ENCODE measurements at regions of chr17 and their contacts with region 1.

Region 1: GRCh38 chr17:41665566-41666236 is 23.0 kb upstream of the EIF1 start:
- DNase-seq: peak; percentile 98
- ATAC-seq: peak; percentile 75
- H3K4me3 Mint-ChIP-seq: peak overlapping the region; percentile 92
- H3K27ac Mint-ChIP-seq: peak overlapping the region; percentile 99
- H3K4me1 Mint-ChIP-seq: peaks cover 40% of the 10 kb centered on the region
- H3K27me3 Mint-ChIP-seq: no peaks in the 10 kb centered on the region
- CTCF ChIP-seq: peak; percentile 24

Region 2: DNA sequence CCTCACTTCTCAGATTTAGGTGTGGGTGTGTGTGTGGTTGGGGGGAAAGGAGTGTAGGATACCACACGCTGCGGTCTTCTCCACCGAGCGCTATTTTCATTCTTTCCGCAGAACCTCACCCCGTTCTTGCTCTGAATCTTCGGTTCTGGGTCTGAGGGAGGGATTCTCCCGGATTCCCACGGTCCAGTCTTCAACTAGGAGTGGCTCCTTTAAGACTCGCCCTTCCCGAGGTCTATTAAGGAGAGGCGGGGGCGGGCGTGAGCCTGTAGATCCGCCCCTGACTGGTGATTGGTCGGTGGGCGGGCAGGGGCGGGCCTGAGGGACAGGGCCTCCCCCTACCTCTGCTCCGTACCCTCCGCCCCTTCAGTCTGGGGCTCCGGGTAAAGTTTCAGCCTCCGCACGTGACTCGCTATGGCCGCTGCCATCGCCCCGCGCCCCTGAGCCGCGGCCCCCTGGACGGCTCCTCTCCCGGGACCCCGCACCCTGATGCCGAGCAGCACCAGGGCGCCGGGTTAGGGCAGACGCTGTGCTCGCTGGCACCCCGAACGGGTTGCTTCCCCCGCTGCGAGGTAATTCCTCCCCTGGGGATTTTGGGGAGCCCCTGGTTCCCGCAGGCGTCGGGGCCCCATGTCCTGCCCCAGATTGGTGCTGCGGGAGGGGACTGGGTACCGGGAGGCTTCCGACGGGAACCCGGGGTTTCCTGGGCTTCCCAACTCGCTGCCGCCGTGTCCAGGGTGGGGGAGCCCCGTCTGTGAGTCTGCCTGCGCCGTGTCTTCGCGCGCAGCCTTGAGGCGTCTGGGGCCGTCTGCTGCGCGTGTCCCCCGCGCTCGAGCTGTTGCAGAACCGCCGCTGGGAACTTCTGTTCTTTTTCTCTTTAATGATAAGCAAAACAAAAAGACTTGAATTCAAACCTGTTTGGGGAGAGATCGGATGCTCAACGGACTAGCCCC is 1347.5 kb before region 1 on chr17:
- CTCF ChIA-PET with region 1: no interaction called
- POLR2A ChIA-PET with region 1: no interaction called
- intact Hi-C with region 1: loop called (anchors 2 kb)
- DNase-seq: peak; percentile 88
- ATAC-seq: peak; percentile 65
- H3K4me3 Mint-ChIP-seq: peak overlapping the region; percentile 93
- H3K27ac Mint-ChIP-seq: peak overlapping the region; percentile 98
- H3K4me1 Mint-ChIP-seq: peaks cover 85% of the 10 kb centered on the region
- H3K27me3 Mint-ChIP-seq: no peaks in the 10 kb centered on the region
- CTCF ChIP-seq: no peak

Region 3: GRCh38 chr17:40559954-40560591 is 1105.6 kb before region 1 on chr17:
- CTCF ChIA-PET with region 1: interaction called, 4 read pairs
- POLR2A ChIA-PET with region 1: interaction called, 6 read pairs
- intact Hi-C with region 1: loop called (anchors 2 kb)
- DNase-seq: peak; percentile 71
- ATAC-seq: peak; percentile 25
- H3K4me3 Mint-ChIP-seq: peak overlapping the region; percentile 89
- H3K27ac Mint-ChIP-seq: peak overlapping the region; percentile 99
- H3K4me1 Mint-ChIP-seq: peaks cover 81% of the 10 kb centered on the region
- H3K27me3 Mint-ChIP-seq: no peaks in the 10 kb centered on the region
- CTCF ChIP-seq: peak; percentile 74

Region 4: DNA sequence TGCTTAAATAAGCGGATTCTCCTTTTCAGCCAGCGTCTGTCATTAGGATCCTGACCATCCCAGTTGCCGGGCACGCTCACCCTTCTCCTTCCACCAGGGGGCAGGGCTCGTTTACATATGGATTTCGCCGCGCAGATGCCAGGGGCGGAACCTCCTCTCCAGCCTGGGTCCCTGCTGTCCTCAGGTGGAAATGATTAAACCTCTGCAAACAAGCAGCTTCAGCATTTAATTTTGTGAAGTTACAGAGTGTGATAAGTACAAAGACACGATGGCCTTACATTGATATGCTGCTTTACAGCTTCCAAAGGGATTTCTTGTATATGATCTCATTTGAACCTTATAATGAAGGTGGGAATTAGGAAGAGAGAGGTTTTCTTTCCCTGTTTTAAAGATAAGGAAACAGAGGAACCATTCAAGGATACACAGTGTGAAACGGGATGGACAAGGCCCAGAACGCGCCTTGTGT is 862.1 kb before region 1 on chr17:
- CTCF ChIA-PET with region 1: interaction called, 10 read pairs
- POLR2A ChIA-PET with region 1: interaction called, 3 read pairs
- intact Hi-C with region 1: loop called (anchors 1 kb)
- DNase-seq: peak; percentile 54
- ATAC-seq: peak; percentile 94
- H3K4me3 Mint-ChIP-seq: no peak overlapping the region
- H3K27ac Mint-ChIP-seq: no peak overlapping the region
- H3K4me1 Mint-ChIP-seq: peaks cover 3% of the 10 kb centered on the region
- H3K27me3 Mint-ChIP-seq: peaks cover 51% of the 10 kb centered on the region
- CTCF ChIP-seq: peak; percentile 44

Region 5: DNA sequence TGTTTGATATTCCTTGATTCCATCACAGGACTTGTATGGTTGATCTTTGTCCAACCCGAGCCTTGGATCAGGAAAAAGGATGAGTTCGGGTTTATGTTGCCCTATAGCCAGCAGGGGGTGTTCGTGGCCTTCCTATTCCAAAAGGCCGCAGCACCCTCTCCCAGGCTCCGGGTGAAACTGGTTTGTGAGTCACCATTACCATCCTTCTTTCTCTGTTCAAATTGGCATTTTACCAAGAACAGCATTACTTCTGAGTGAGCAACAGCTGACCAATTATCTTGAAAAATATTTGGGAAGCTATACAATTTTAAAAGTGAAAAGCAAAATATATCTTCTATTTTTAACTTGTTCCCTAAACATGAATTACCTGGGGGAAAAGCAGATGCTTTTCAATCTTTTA is 756.4 kb before region 1 on chr17:
- CTCF ChIA-PET with region 1: interaction called, 16 read pairs
- POLR2A ChIA-PET with region 1: no interaction called
- intact Hi-C with region 1: loop called (anchors 1 kb)
- DNase-seq: no peak
- ATAC-seq: peak; percentile 77
- H3K4me3 Mint-ChIP-seq: no peak overlapping the region
- H3K27ac Mint-ChIP-seq: no peak overlapping the region
- H3K4me1 Mint-ChIP-seq: no peaks in the 10 kb centered on the region
- H3K27me3 Mint-ChIP-seq: peaks cover 34% of the 10 kb centered on the region
- CTCF ChIP-seq: no peak

Region 6: GRCh38 chr17:41648411-41649195 is 17.1 kb before region 1 on chr17:
- CTCF ChIA-PET with region 1: interaction called, 150 read pairs
- POLR2A ChIA-PET with region 1: interaction called, 34 read pairs
- intact Hi-C with region 1: loop called (anchors 1 kb)
- DNase-seq: peak; percentile 85
- ATAC-seq: peak; percentile 91
- H3K4me3 Mint-ChIP-seq: peak overlapping the region; percentile 79
- H3K27ac Mint-ChIP-seq: peak overlapping the region; percentile 54
- H3K4me1 Mint-ChIP-seq: peaks cover 10% of the 10 kb centered on the region
- H3K27me3 Mint-ChIP-seq: no peaks in the 10 kb centered on the region
- CTCF ChIP-seq: peak; percentile 88

Region 7: GRCh38 chr17:41688699-41689496 is 23.2 kb after region 1 on chr17 and contains the start of gene EIF1:
- CTCF ChIA-PET with region 1: interaction called, 72 read pairs
- POLR2A ChIA-PET with region 1: interaction called, 272 read pairs
- intact Hi-C with region 1: loop called (anchors 1 kb)
- DNase-seq: peak; percentile 100
- ATAC-seq: peak; percentile 78
- H3K4me3 Mint-ChIP-seq: peak within 1 kb of the TSS; percentile 95
- H3K27ac Mint-ChIP-seq: peak within 1 kb of the TSS; percentile 99
- H3K4me1 Mint-ChIP-seq: peaks cover 39% of the 10 kb centered on the region
- H3K27me3 Mint-ChIP-seq: no peaks in the 10 kb centered on the region
- CTCF ChIP-seq: no peak
- total RNA-seq, gene EIF1: 843 and 900 TPM in 2 replicates

Region 8: DNA sequence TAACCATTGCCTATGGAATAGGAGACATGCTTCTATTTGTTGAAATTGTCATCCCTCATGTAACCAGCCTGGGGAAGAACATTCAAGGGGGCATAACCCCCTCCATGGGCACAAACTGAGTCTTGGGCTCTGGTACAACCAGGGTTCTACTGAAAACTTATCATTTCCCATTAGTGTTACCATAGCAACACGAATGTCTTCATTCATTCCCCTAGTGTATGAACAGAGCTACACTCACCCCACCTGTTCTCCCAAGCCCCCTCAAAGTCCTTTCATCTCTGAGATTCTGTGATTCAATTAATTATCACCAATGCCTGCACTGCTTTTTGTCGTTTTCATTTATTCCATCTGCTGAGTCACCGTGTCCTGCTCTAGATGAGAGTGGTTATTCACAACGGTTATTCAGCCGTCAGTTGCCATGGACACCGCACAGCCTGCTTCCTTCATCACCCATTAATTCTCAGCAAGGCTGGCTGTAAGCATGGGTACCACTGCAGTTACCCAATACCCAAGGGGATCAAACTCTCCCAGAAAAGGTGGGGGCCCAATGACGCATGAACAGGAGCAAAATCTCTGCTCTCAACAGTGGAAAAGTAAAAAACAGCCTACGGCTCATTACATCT is 44.9 kb after region 1 on chr17:
- CTCF ChIA-PET with region 1: no interaction called
- POLR2A ChIA-PET with region 1: no interaction called
- intact Hi-C with region 1: no loop called
- DNase-seq: no peak
- ATAC-seq: no peak
- H3K4me3 Mint-ChIP-seq: no peak overlapping the region
- H3K27ac Mint-ChIP-seq: no peak overlapping the region
- H3K4me1 Mint-ChIP-seq: no peaks in the 10 kb centered on the region
- H3K27me3 Mint-ChIP-seq: peaks cover 5% of the 10 kb centered on the region
- CTCF ChIP-seq: no peak

Region 9: GRCh38 chr17:42163113-42163512 is 497.4 kb after region 1 on chr17:
- CTCF ChIA-PET with region 1: no interaction called
- POLR2A ChIA-PET with region 1: no interaction called
- intact Hi-C with region 1: no loop called
- DNase-seq: no peak
- ATAC-seq: no peak
- H3K4me3 Mint-ChIP-seq: no peak overlapping the region
- H3K27ac Mint-ChIP-seq: no peak overlapping the region
- H3K4me1 Mint-ChIP-seq: peaks cover 8% of the 10 kb centered on the region
- H3K27me3 Mint-ChIP-seq: no peaks in the 10 kb centered on the region
- CTCF ChIP-seq: no peak